HCT116 (cell line): ENCODE measurements at regions of chr10 and their contacts with region 1.

Region 1: GRCh38 chr10:9274206-9274755 is 1219.8 kb downstream of the GATA3 start:
- DNase-seq: no peak
- ATAC-seq: no peak
- H3K4me3 ChIP-seq: no peak overlapping the region
- H3K27ac ChIP-seq: no peak overlapping the region
- H3K4me1 ChIP-seq: no peaks in the 10 kb centered on the region
- H3K27me3 ChIP-seq: no peaks in the 10 kb centered on the region
- CTCF ChIP-seq: no peak
- POLR2A ChIP-seq: no peak
- RAD21 ChIP-seq: no peak

Region 2: GRCh38 chr10:9243941-9244411 is 30.3 kb before region 1 on chr10:
- CTCF ChIA-PET with region 1: no interaction called
- POLR2A ChIA-PET with region 1: no interaction called
- RAD21 ChIA-PET with region 1: no interaction called
- intact Hi-C with region 1: loop called (anchors 1 kb)
- DNase-seq: no peak
- ATAC-seq: no peak
- H3K4me3 ChIP-seq: no peak overlapping the region
- H3K27ac ChIP-seq: no peak overlapping the region
- H3K4me1 ChIP-seq: no peaks in the 10 kb centered on the region
- H3K27me3 ChIP-seq: no peaks in the 10 kb centered on the region
- CTCF ChIP-seq: no peak
- POLR2A ChIP-seq: no peak
- RAD21 ChIP-seq: no peak